Psoas muscle (tissue), 8 donors: ENCODE measurements at regions of chr4 and their contacts with region 1.

Region 1: DNA sequence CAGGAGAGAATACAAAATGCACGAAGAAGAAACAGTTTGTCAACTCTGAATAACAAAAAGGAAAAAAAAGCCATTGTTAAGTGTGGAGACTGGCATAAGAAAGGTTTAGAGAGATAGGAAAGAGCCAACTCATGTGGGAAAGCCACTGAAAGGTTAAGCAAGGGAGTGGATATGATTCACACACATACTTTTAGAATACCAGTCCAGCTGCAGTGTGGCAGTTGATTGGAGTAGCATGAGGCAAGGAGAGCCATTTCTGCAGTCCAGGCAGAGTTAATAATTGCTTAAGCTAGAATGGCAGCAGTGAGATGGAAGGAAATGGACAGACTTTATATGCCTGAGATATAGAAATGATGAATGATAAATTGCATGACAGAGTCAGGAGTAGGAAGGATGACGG is 36.9 kb upstream of the ADAD1 start:
- DNase-seq: peak in 1 of 2 donors; percentile 35
- ATAC-seq: peak; percentile 95 to 100 (median 99)
- H3K4me3 ChIP-seq: no peak overlapping the region
- H3K27ac ChIP-seq: peak overlapping the region; percentile 67
- H3K4me1 ChIP-seq: peaks cover 22% of the 10 kb centered on the region
- H3K27me3 ChIP-seq: no peaks in the 10 kb centered on the region
- CTCF ChIP-seq: no peak

Region 2: GRCh38 chr4:122252584-122252983 is 89.3 kb before region 1 on chr4:
- intact Hi-C with region 1: loop called in 1 of 2 experiments (anchors 10 kb)
- DNase-seq: no peak
- ATAC-seq: no peak
- H3K4me3 ChIP-seq: no peak overlapping the region
- H3K27ac ChIP-seq: no peak overlapping the region
- H3K4me1 ChIP-seq: no peaks in the 10 kb centered on the region
- H3K27me3 ChIP-seq: no peaks in the 10 kb centered on the region
- CTCF ChIP-seq: no peak